ENCODE measurements at regions of chr6 and their contacts with region 1.

Region 1: GRCh38 chr6:126781582-126781981 is 336.9 kb upstream of the RSPO3 start:
- DNase-seq: no peak
- ATAC-seq: no peak
- H3K4me3 ChIP-seq: no peak overlapping the region
- H3K27ac ChIP-seq: no peak overlapping the region
- H3K4me1 ChIP-seq: no peaks in the 10 kb centered on the region
- H3K27me3 ChIP-seq: no peaks in the 10 kb centered on the region
- CTCF ChIP-seq: no peak
- POLR2A ChIP-seq: no peak

Region 2: GRCh38 chr6:126753606-126754005 is 28.0 kb before region 1 on chr6:
- in situ Hi-C with region 1: no loop called
- intact Hi-C with region 1: loop called (anchors 1 kb)
- DNase-seq: no peak
- ATAC-seq: no peak
- H3K4me3 ChIP-seq: no peak overlapping the region
- H3K27ac ChIP-seq: no peak overlapping the region
- H3K4me1 ChIP-seq: no peaks in the 10 kb centered on the region
- H3K27me3 ChIP-seq: no peaks in the 10 kb centered on the region
- CTCF ChIP-seq: no peak
- POLR2A ChIP-seq: no peak